ENCODE measurements at regions of chr16 and their contacts with region 1.

Region 1: GRCh38 chr16:57576429-57576870 is 34.0 kb downstream of the ADGRG5 start:
- DNase-seq: peak; percentile 69 to 79 (median 73)
- H3K4me3 ChIP-seq: no peak overlapping the region
- H3K4me3 Mint-ChIP-seq: peak overlapping the region in 2 of 8 donors; percentile 21 to 27
- H3K27ac ChIP-seq: no peak overlapping the region
- H3K27ac Mint-ChIP-seq: peak overlapping the region in 5 of 7 donors; percentile 6 to 65 (median 42)
- H3K4me1 ChIP-seq: peaks cover 30% of the 10 kb centered on the region
- H3K4me1 Mint-ChIP-seq: peaks cover 15 to 43% (median 31%) of the 10 kb centered on the region in 4 donors
- H3K27me3 ChIP-seq: no peaks in the 10 kb centered on the region
- H3K27me3 Mint-ChIP-seq: no peaks in the 10 kb centered on the region

Region 2: DNA sequence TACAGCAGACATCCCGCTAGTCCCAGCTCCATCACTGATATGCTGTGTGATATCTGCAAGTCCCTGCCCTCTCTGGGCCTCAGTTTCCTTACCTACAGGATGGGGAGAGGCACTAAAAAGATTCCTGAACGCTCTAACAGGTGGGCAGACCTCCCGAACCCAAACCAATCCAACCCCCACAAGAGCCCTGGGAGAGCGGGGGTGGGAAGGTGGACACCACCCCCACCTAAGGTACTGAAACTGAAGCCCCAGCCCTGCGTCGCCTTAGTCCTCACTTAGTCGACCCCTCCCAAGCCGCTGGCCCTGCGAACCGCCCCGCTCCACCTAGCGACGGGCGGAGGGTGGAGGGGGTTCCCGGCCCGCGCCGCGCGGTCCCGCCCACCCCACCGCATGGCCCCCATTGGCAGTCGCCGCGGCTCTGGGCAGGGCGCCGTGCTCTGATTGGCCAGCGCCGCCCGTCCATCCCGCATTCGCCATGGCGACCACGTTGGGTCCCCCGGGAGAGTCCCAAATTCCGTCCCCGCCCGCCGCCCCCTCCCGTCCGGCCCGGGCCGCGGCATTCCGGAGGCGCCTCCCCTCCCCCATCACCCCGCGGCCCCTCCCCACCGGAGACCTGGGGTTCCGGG is 40.7 kb before region 1 on chr16:
- CTCF ChIA-PET with region 1: interaction called, 10 read pairs
- POLR2A ChIA-PET with region 1: interaction called, 9 read pairs
- intact Hi-C with region 1: no loop called
- DNase-seq: peak; percentile 89 to 95 (median 93)
- H3K4me3 ChIP-seq: peak overlapping the region in 1 of 2 donors; percentile 51
- H3K4me3 Mint-ChIP-seq: peak overlapping the region; percentile 80 to 91 (median 83)
- H3K27ac ChIP-seq: peak overlapping the region; percentile 92
- H3K27ac Mint-ChIP-seq: peak overlapping the region; percentile 96 to 99 (median 98)
- H3K4me1 ChIP-seq: peaks cover 76% of the 10 kb centered on the region
- H3K4me1 Mint-ChIP-seq: peaks cover 60 to 76% (median 69%) of the 10 kb centered on the region in 4 donors
- H3K27me3 ChIP-seq: no peaks in the 10 kb centered on the region
- H3K27me3 Mint-ChIP-seq: no peaks in the 10 kb centered on the region

Region 3: DNA sequence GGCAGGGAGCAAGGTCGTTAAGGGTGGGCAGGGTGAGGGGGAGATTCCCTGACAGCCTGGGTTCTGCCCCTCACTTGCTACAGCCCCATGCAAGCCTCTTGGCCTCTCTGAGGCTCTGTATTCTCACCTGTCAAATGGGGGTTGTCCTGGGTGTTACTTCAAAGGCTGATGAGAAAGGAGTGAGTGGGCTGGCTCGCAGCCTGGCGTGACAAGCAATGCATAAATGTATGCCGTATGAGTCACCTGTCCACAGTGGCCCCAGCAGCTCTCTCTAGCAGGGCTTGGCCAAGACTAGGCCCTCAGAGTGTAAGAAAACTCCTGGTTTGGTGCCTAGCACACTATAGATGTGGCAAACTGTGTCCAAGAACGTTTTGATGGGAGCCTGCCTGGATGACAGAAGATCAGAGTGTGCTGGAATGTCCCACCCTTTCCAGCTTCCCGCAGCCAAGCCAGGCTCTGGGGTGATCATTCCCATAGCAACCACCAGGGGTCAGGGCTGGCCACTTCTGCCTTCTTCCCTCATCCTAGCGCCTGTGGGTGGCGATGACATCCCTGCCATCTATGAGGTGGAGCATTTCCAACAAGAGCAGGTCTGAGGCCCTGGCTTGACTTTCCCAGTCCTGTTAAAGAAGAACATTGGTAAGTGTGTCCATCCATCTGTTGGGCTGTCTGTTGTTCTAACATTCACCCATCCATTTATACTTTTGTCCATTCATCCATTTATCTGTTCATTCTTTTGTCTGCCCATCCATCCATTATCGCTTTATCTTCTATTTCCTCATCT is 14.8 kb after region 1 on chr16:
- CTCF ChIA-PET with region 1: interaction called, 70 read pairs
- POLR2A ChIA-PET with region 1: interaction called, 9 read pairs
- intact Hi-C with region 1: loop called (anchors 1 kb)
- DNase-seq: peak; percentile 49 to 60 (median 59)
- H3K4me3 ChIP-seq: no peak overlapping the region
- H3K4me3 Mint-ChIP-seq: peak overlapping the region in 6 of 8 donors; percentile 23 to 89 (median 56)
- H3K27ac ChIP-seq: no peak overlapping the region
- H3K27ac Mint-ChIP-seq: peak overlapping the region; percentile 8 to 91 (median 68)
- H3K4me1 ChIP-seq: peaks cover 35% of the 10 kb centered on the region
- H3K4me1 Mint-ChIP-seq: peaks cover 28 to 49% (median 35%) of the 10 kb centered on the region in 4 donors
- H3K27me3 ChIP-seq: no peaks in the 10 kb centered on the region
- H3K27me3 Mint-ChIP-seq: no peaks in the 10 kb centered on the region

Region 4: DNA sequence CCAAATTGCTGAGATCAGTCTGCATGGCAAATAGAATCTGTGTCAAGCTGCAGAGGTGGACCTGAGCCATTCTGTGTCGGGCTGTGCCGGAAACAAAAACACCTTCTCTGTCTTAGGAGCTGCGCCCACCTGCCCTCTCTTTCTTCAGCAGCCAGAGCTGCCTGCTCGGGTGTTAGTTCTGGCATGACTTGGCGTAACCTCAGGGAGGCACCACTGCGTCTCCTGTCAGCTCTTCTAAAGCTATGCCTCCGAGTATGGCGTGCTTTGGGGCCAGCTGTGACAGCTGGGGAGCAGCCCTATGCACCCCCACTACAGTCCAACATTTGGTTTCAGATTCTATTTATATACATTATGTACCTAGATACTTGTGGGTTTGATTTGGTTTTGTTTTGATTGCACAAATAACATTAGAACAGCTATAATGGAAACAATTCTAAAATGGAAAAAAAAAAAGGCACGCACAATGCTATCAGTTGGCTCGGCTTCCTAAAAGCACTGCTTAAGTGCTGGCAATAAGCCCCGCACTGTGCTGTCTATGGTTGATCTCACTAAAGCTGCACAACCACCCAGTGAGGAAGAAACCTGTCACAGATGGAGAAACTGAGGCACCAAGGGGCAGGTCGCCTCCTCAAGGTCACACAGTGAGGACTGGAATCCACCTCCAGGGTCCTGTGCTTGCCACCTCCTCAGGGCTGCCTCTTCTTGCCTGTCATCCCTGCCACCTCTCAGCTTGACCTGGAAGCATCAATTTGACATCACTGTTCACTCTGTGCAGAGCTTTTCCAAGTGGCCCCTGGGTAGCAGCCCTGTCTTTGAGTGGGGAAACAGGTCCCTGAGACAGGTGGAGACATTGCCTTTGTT is 33.3 kb after region 1 on chr16:
- CTCF ChIA-PET with region 1: interaction called, 21 read pairs
- POLR2A ChIA-PET with region 1: interaction called, 4 read pairs
- intact Hi-C with region 1: no loop called
- DNase-seq: peak; percentile 60 to 67 (median 60)
- H3K4me3 ChIP-seq: peak overlapping the region; percentile 12 to 30
- H3K4me3 Mint-ChIP-seq: peak overlapping the region; percentile 1 to 87 (median 76)
- H3K27ac ChIP-seq: peak overlapping the region; percentile 23
- H3K27ac Mint-ChIP-seq: peak overlapping the region; percentile 67 to 92 (median 88)
- H3K4me1 ChIP-seq: peaks cover 26% of the 10 kb centered on the region
- H3K4me1 Mint-ChIP-seq: peaks cover 13 to 29% (median 20%) of the 10 kb centered on the region in 4 donors
- H3K27me3 ChIP-seq: no peaks in the 10 kb centered on the region
- H3K27me3 Mint-ChIP-seq: no peaks in the 10 kb centered on the region

Region 5: DNA sequence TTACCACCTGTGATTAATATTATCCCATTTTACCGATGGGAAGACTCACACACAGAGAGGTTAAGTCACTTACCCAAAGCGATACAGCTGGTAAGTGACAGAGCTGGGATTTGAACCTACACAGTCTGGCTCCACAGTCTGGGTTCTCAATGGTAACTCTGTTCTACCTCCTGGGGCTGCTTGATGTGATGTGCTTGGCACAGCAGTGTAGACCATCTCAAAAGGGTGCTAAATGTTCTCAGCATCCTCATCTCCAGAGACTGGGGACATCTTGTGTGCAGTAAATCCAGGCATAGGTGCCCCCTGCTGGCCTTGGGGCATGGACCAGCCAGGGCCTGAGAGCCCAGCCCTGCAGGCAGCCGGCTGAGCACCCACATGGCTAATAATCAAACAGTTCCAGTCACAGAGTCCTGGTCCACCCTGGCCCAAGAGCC is 143.7 kb after region 1 on chr16:
- CTCF ChIA-PET with region 1: no interaction called
- POLR2A ChIA-PET with region 1: no interaction called
- intact Hi-C with region 1: loop called (anchors 1 kb)
- DNase-seq: peak in 3 of 5 donors; percentile 28 to 37 (median 33)
- H3K4me3 ChIP-seq: no peak overlapping the region
- H3K4me3 Mint-ChIP-seq: no peak overlapping the region
- H3K27ac ChIP-seq: no peak overlapping the region
- H3K27ac Mint-ChIP-seq: peak overlapping the region in 1 of 7 donors; percentile 47
- H3K4me1 ChIP-seq: no peaks in the 10 kb centered on the region
- H3K4me1 Mint-ChIP-seq: no peaks in the 10 kb centered on the region
- H3K27me3 ChIP-seq: no peaks in the 10 kb centered on the region
- H3K27me3 Mint-ChIP-seq: peaks cover 6% of the 10 kb centered on the region in 2 donors

Region 6: DNA sequence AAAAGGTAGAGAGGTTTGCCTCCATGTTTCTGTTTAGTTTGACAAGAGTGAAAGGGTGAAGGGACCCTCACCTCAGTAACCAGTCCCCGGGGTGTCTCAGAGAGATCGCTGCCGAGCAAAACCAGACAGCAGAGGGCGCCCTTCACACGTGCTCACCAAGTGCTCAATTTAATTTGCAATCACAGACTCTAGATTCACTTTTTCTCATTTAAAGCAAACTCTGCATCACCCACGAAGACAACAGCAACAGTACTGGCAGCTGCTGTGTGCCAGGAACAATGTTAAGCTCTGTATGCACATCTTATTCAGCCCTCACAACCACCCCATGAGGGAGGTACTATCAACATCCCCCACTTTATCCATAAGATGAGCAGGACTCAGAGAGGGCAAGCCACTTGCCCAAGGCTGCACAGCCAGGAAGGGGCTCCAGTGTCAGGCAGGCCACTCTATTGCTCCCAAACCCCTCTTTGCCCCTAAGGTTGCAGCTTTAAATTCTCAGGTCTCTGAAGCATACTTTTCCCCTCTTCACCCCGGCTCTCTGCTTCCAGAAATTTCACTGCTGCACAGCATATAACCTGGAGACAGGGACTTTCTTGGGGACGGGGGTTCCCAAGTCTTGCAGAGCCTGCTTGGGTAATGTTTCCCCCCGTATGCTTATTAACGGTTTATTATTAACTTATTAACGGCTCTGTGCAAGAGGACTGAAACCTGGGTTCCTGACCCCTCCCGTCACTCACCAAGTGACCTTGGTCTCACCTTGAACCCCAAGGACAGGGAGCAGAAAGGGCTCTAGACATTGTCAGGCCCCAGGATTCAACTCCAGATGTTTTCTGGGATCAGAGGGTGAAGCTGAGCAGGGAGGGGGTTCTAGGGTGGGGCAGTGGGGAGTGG is 323.6 kb after region 1 on chr16:
- CTCF ChIA-PET with region 1: no interaction called
- POLR2A ChIA-PET with region 1: no interaction called
- intact Hi-C with region 1: loop called (anchors 2 kb)
- DNase-seq: peak; percentile 68 to 75 (median 71)
- H3K4me3 ChIP-seq: no peak overlapping the region
- H3K4me3 Mint-ChIP-seq: no peak overlapping the region
- H3K27ac ChIP-seq: no peak overlapping the region
- H3K27ac Mint-ChIP-seq: peak overlapping the region in 1 of 7 donors; percentile 53
- H3K4me1 ChIP-seq: peaks cover under 1% of the 10 kb centered on the region
- H3K4me1 Mint-ChIP-seq: peaks cover under 1 to 5% (median 4%) of the 10 kb centered on the region in 4 donors
- H3K27me3 ChIP-seq: no peaks in the 10 kb centered on the region
- H3K27me3 Mint-ChIP-seq: peaks cover 5 to 21% of the 10 kb centered on the region in 2 donors

Region 7: DNA sequence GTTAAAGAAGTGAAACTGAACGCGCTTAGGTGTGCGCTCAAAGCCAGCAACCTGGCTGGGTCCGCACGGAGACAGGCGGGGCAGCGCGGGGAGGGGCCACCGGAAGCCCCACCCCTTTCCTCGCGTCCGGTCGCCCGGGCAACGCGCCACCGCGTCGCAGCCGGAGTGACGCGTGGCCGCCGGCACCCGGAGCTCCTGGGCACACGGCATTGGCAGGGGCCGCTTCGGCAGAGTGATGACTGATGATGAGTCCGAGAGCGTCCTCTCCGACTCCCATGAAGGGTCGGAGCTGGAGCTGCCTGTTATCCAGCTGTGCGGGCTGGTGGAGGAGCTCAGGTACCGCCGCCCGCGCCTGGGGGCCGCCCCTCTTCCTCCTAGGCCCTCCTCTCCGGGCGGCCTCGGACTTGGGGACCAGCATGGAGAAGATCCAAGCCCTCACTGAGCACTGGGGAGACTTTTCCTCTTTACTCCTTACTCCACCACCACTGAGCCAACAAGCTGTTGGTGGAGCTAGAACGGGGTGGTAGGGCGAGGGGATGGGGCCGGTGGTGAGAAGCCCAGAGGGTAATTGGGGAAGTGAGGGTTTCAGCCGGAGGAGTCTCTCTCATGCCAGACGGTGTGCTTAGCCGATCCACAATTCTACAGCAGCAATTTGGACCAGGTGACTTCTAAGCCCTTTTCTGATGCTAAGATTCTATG is 673.5 kb after region 1 on chr16:
- CTCF ChIA-PET with region 1: no interaction called
- POLR2A ChIA-PET with region 1: no interaction called
- intact Hi-C with region 1: no loop called
- DNase-seq: peak; percentile 78 to 89 (median 87)
- H3K4me3 ChIP-seq: peak overlapping the region; percentile 55 to 58
- H3K4me3 Mint-ChIP-seq: peak overlapping the region; percentile 80 to 93 (median 85)
- H3K27ac ChIP-seq: no peak overlapping the region
- H3K27ac Mint-ChIP-seq: peak overlapping the region; percentile 64 to 91 (median 86)
- H3K4me1 ChIP-seq: peaks cover 12% of the 10 kb centered on the region
- H3K4me1 Mint-ChIP-seq: peaks cover 6 to 14% (median 10%) of the 10 kb centered on the region in 4 donors
- H3K27me3 ChIP-seq: no peaks in the 10 kb centered on the region
- H3K27me3 Mint-ChIP-seq: peaks cover 1 to 4% of the 10 kb centered on the region in 2 donors

Measured in CD4-positive, alpha-beta memory T cell (primary cell).